Right cardiac atrium (tissue), 5 donors: ENCODE measurements at regions of chr22 and their contacts with region 1.

Region 1: GRCh38 chr22:31080848-31081649 is at the start of gene SMTN:
- DNase-seq: peak; percentile 94 to 97 (median 97)
- ATAC-seq: peak; percentile 81 to 82
- H3K4me3 ChIP-seq: peak within 1 kb of the TSS; percentile 74
- H3K27ac ChIP-seq: peak within 1 kb of the TSS; percentile 82
- H3K4me1 ChIP-seq: peaks cover 7% of the 10 kb centered on the region
- H3K27me3 ChIP-seq: no peaks in the 10 kb centered on the region
- total RNA-seq, gene SMTN: 156 to 233 (median 217) TPM

Region 2: GRCh38 chr22:30947816-30948454 is 133.1 kb before region 1 on chr22:
- intact Hi-C with region 1: loop called in 3 of 4 experiments (anchors 2 to 5 kb)
- DNase-seq: no peak
- ATAC-seq: peak; percentile 66 to 70
- H3K4me3 ChIP-seq: no peak overlapping the region
- H3K27ac ChIP-seq: peak overlapping the region; percentile 89
- H3K4me1 ChIP-seq: peaks cover 11% of the 10 kb centered on the region
- H3K27me3 ChIP-seq: no peaks in the 10 kb centered on the region

Region 3: GRCh38 chr22:30968924-30969539 is 112.0 kb before region 1 on chr22 and contains the start of gene TUG1:
- intact Hi-C with region 1: loop called (anchors 5 kb)
- DNase-seq: peak; percentile 99 to 100 (median 99)
- ATAC-seq: peak; percentile 98
- H3K4me3 ChIP-seq: peak within 1 kb of the TSS; percentile 81
- H3K27ac ChIP-seq: peak within 1 kb of the TSS; percentile 81
- H3K4me1 ChIP-seq: peaks cover 5% of the 10 kb centered on the region
- H3K27me3 ChIP-seq: no peaks in the 10 kb centered on the region
- total RNA-seq, gene TUG1: 42.1 to 56.2 (median 47.3) TPM

Region 4: GRCh38 chr22:31230871-31231621 is 150.0 kb after region 1 on chr22:
- intact Hi-C with region 1: loop called in 1 of 4 experiments (anchors 10 kb)
- DNase-seq: peak in 1 of 3 donors; percentile 72
- ATAC-seq: peak; percentile 77 to 81
- H3K4me3 ChIP-seq: no peak overlapping the region
- H3K27ac ChIP-seq: peak overlapping the region; percentile 95
- H3K4me1 ChIP-seq: peaks cover 13% of the 10 kb centered on the region
- H3K27me3 ChIP-seq: no peaks in the 10 kb centered on the region